H1 (cell line): ENCODE measurements at regions of chr1 and their contacts with region 1.

Region 1: DNA sequence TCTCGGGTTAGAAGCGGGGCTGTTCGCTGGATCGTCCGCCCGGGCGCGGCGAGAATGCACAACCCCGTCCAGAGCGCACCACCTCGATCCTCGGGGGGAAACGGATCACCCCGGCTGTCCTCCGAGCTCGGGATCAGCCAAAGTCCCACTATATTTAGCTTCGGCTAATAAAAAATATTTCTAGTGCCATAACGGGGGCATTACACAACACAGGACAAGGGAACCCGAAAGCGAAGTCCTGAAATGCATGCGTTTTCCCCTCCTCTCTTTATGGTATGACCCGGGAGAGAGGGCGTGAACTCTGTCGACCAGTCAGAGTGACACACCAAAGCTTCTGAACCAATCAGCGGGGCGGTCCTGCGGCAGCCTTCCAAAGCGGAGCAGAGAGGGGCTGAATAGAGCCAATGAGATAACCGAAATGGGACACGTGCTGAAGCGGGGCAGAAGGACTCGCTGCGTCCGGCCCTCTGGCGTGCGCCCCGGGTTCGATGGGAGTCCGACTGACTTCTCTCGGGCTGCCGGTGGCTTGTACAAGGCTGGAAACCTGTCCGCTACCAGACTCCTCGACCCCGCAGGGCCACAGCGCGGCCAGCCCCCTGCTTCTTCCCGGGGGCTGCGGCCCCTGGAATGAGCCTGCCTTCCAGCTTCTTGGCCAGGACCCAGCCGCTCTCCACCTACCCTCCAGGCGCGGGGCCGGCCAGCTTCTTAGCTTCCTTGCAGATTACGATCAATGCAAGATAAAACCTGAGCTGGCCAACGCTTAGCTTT is at the start of gene ALDH4A1:
- DNase-seq: peak; percentile 87 to 88
- H3K4me3 ChIP-seq: peak within 1 kb of the TSS; percentile 91 to 96 (median 93)
- H3K27ac ChIP-seq: peak within 1 kb of the TSS; percentile 99
- H3K4me1 ChIP-seq: peaks cover 0 to 5% (median 2%) of the 10 kb centered on the region in 4 experiments; a peak in 5 of 7 replicates
- H3K27me3 ChIP-seq: peaks cover 0 to 3% (median 0%) of the 10 kb centered on the region in 4 experiments; a peak in 4 of 7 replicates
- CTCF ChIP-seq: no peak
- EP300 ChIP-seq: peak in 1 of 2 experiments; percentile 99; a peak in 2 of 3 replicates
- POLR2A ChIP-seq: peak in 1 of 2 experiments; percentile 84; a peak in 2 of 3 replicates
- RAD21 ChIP-seq: no peak
- total RNA-seq, gene ALDH4A1: 29.4 and 30.3 TPM in 2 replicates

Region 2: GRCh38 chr1:18926315-18927081 is 23.8 kb after region 1 on chr1:
- CTCF ChIA-PET with region 1: interaction called, 46 read pairs
- POLR2A ChIA-PET with region 1: interaction called, 7 read pairs
- DNase-seq: no peak
- H3K4me3 ChIP-seq: no peak overlapping the region
- H3K27ac ChIP-seq: no peak overlapping the region
- H3K4me1 ChIP-seq: peaks cover 0 to 20% (median 11%) of the 10 kb centered on the region in 4 experiments; a peak in 6 of 7 replicates
- H3K27me3 ChIP-seq: no peaks in the 10 kb centered on the region
- CTCF ChIP-seq: no peak
- EP300 ChIP-seq: no peak
- POLR2A ChIP-seq: no peak
- RAD21 ChIP-seq: no peak

Region 3: GRCh38 chr1:18949686-18950400 is 47.1 kb after region 1 on chr1:
- CTCF ChIA-PET with region 1: interaction called, 42 read pairs
- POLR2A ChIA-PET with region 1: interaction called, 11 read pairs
- DNase-seq: no peak
- H3K4me3 ChIP-seq: peak overlapping the region in 2 of 4 experiments; percentile 8 to 34; a peak in 3 of 8 replicates
- H3K27ac ChIP-seq: peak overlapping the region; percentile 30; the same call in 1 of the 2 replicates
- H3K4me1 ChIP-seq: peaks cover 16 to 24% (median 19%) of the 10 kb centered on the region in 4 experiments
- H3K27me3 ChIP-seq: peaks cover 0 to 13% (median 8%) of the 10 kb centered on the region in 4 experiments; a peak in 5 of 7 replicates
- CTCF ChIP-seq: peak; percentile 2 to 25 (median 22); a peak in 2 of 4 replicates
- EP300 ChIP-seq: no peak
- POLR2A ChIP-seq: peak in 1 of 2 experiments; percentile 59; a peak in 2 of 3 replicates
- RAD21 ChIP-seq: peak in 1 of 2 experiments; percentile 21; a peak in 1 of 4 replicates

Region 4: GRCh38 chr1:18965206-18966173 is 62.8 kb after region 1 on chr1:
- CTCF ChIA-PET with region 1: interaction called, 40 read pairs
- POLR2A ChIA-PET with region 1: interaction called, 4 read pairs
- DNase-seq: peak in 1 of 2 experiments; percentile 75
- H3K4me3 ChIP-seq: no peak overlapping the region
- H3K27ac ChIP-seq: peak overlapping the region; percentile 34; the same call in 1 of the 2 replicates
- H3K4me1 ChIP-seq: peaks cover 0 to 8% (median 1%) of the 10 kb centered on the region in 4 experiments; a peak in 4 of 7 replicates
- H3K27me3 ChIP-seq: peaks cover 0 to 2% (median 1%) of the 10 kb centered on the region in 4 experiments; a peak in 3 of 7 replicates
- CTCF ChIP-seq: no peak
- EP300 ChIP-seq: no peak
- POLR2A ChIP-seq: no peak
- RAD21 ChIP-seq: no peak

Region 5: GRCh38 chr1:19010995-19011844 is 108.5 kb after region 1 on chr1:
- CTCF ChIA-PET with region 1: interaction called, 12 read pairs
- POLR2A ChIA-PET with region 1: no interaction called
- DNase-seq: peak in 1 of 2 experiments; percentile 69
- H3K4me3 ChIP-seq: no peak overlapping the region
- H3K27ac ChIP-seq: no peak overlapping the region
- H3K4me1 ChIP-seq: peaks cover 1 to 20% (median 9%) of the 10 kb centered on the region in 4 experiments
- H3K27me3 ChIP-seq: no peaks in the 10 kb centered on the region; a peak in 1 of 7 replicates
- CTCF ChIP-seq: no peak
- EP300 ChIP-seq: no peak
- POLR2A ChIP-seq: no peak
- RAD21 ChIP-seq: no peak

Region 6: DNA sequence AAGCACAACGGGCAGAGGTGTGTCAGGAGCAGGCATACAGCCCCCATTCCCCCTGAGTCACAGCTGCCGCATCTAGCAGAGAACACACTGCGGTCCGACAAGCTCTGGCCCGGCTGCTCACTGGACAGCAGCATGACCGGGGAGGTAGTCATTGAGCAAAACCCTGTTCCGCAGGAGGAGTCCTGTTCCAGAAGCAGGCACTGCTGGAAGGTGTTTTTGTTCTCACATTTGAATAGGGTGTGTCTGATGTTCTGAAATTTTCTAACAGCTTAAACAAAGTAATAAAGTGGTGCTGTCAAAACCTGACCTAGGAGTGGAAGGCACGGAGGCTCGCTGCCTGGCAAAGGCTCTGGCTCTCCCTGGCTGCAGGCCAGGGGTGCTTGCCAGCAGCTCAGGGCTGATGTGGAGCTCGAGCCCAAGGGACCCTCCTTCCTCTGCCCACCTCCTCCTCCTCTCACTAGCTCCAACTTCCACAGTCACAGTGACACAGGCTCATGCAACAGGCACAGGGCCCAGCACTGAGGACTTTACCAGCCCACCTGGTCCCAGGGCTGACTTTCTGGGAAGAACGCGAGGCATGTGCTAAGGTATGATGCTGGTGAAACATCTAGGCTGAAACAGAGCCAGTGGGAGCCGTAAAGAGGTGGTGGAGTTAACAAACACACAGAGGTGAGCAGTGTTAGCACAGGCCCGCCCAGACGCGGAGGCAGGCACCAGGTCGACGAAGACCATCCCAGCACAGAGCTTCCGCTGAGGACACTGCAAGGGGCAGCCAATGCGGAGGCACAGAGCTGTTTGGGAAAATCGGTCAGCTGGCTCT is 172.4 kb after region 1 on chr1:
- CTCF ChIA-PET with region 1: interaction called, 29 read pairs
- POLR2A ChIA-PET with region 1: no interaction called
- DNase-seq: no peak
- H3K4me3 ChIP-seq: no peak overlapping the region
- H3K27ac ChIP-seq: no peak overlapping the region
- H3K4me1 ChIP-seq: peaks cover 0 to 6% (median 2%) of the 10 kb centered on the region in 4 experiments; a peak in 4 of 7 replicates
- H3K27me3 ChIP-seq: no peaks in the 10 kb centered on the region
- CTCF ChIP-seq: no peak
- EP300 ChIP-seq: no peak
- POLR2A ChIP-seq: no peak
- RAD21 ChIP-seq: no peak

Region 7: DNA sequence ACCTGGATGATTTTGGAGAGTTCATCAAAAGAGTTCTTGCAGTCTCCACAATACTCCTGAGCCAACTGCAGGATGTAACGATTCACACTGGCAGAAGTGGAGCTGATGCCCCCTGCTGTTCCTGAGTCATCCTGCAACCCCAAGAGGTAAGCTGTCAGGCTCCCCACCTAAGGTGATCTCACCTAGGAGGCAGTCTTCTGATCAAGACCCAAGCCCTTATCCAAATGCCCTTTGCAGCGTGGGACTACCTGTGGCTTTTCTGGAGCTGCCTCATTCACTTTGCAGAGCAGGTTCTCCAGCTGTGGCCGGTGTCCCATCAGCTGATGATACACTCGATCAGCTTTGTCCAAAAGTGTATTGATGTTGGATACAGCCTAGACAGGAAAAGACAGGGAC is 211.0 kb after region 1 on chr1:
- CTCF ChIA-PET with region 1: no interaction called
- POLR2A ChIA-PET with region 1: no interaction called
- DNase-seq: peak in 1 of 2 experiments; percentile 10
- H3K4me3 ChIP-seq: no peak overlapping the region
- H3K27ac ChIP-seq: no peak overlapping the region
- H3K4me1 ChIP-seq: no peaks in the 10 kb centered on the region
- H3K27me3 ChIP-seq: no peaks in the 10 kb centered on the region
- CTCF ChIP-seq: peak; percentile 11 to 24 (median 14); a peak in 3 of 4 replicates
- EP300 ChIP-seq: no peak
- POLR2A ChIP-seq: no peak
- RAD21 ChIP-seq: no peak